Motor neuron (in vitro differentiated cells): ENCODE measurements at regions of chr1 and their contacts with region 1.

Region 1: GRCh38 chr1:63892632-63893395 is 119.0 kb downstream of the ROR1 start:
- ATAC-seq: peak; percentile 41 to 99 (median 98)
- H3K4me3 ChIP-seq: no peak overlapping the region
- H3K27ac ChIP-seq: no peak overlapping the region
- H3K4me1 ChIP-seq: peaks cover 4 to 7% of the 10 kb centered on the region in 2 donors

Region 2: DNA sequence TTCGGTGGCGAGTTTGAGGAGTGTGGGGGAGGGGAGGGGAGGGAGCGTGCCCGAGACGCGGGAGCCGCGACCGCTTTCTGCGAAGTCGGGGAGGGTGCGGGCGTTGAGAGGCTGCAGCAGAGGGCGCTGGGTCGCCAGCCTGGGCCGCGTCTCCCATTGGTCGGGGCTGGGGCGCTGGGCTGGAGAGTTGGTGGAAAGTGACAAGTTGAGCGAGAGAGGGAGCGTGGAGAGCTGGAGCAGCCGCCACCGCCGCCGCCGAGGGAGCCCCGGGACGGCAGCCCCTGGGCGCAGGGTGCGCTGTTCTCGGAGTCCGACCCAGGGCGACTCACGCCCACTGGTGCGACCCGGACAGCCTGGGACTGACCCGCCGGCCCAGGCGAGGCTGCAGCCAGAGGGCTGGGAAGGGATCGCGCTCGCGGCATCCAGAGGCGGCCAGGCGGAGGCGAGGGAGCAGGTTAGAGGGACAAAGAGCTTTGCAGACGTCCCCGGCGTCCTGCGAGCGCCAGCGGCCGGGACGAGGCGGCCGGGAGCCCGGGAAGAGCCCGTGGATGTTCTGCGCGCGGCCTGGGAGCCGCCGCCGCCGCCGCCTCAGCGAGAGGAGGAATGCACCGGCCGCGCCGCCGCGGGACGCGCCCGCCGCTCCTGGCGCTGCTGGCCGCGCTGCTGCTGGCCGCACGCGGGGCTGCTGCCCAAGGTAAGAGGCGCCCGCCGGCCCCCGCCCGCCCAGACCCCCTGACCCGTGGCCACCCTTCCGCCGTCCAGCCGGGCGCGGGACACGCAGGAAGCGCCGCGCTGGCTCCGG is 118.8 kb before region 1 on chr1 and contains the start of gene ROR1:
- in situ Hi-C with region 1: loop called in 1 of 9 experiments (anchors 25 kb)
- ATAC-seq: peak; percentile 89 to 98 (median 98)
- H3K4me3 ChIP-seq: peak within 1 kb of the TSS; percentile 45 to 73 (median 53)
- H3K27ac ChIP-seq: no peak within 1 kb of the TSS
- H3K4me1 ChIP-seq: no peaks in the 10 kb centered on the region
- total RNA-seq, gene ROR1: 1.2 to 15.7 (median 2.7) TPM